GM10248 (cell line): ENCODE measurements at regions of chr5 and their contacts with region 1.

Region 1: DNA sequence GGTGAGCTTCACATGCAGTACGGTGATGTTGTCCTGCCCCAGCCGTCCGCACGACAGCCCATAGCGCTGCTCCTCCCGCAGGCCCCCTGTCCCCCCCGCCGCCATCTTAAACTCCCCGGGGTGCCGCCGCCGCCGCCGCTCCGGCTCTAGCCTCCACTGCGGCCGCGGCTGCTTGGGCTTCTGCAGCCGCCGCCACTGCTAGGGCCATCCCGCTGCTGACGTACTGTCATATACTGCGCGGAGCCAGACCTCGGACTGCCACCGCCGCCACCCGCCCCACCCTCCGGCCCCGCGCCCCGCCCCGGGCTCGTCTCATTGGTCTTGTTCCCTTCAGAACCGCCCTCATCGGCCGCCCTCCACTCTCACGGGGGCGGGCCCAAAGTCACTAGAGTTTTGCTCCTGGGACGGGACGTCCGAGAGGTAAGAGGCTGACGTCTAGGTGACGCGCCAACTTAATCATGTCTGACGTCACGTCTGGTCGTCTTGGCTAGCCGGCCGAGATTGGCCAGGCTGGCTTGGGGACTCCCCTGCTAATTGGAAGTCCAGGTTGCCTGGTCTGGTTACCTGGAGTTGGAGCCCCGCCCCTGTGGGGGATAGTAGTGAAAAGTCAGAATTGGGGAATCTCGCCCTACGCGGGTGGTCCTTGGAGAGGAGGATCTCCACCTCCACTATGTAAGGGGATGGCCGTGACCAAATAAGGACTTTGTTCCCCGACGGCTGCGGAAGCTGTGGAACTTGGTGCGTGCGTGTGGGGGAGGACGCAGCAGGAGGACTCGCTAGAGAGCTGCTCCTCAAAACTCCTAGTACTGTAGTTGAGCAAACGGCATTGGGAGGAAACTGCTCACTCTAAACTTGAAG is at the start of gene ELL2:
- DNase-seq: peak; percentile 95
- CTCF ChIP-seq: no peak

Region 2: GRCh38 chr5:95697781-95698681 is 263.8 kb before region 1 on chr5:
- CTCF ChIA-PET with region 1: no interaction called
- POLR2A ChIA-PET with region 1: no interaction called
- DNase-seq: no peak
- CTCF ChIP-seq: no peak

Region 3: GRCh38 chr5:95939465-95939864 is 22.4 kb before region 1 on chr5:
- CTCF ChIA-PET with region 1: interaction called, 37 read pairs
- POLR2A ChIA-PET with region 1: interaction called, 3 read pairs
- DNase-seq: no peak
- CTCF ChIP-seq: no peak

Region 4: GRCh38 chr5:95949810-95950209 is 12.0 kb before region 1 on chr5:
- CTCF ChIA-PET with region 1: interaction called, 37 read pairs
- POLR2A ChIA-PET with region 1: interaction called, 4 read pairs
- DNase-seq: peak; percentile 32
- CTCF ChIP-seq: no peak

Region 5: GRCh38 chr5:95973793-95974325 is 12.0 kb after region 1 on chr5:
- CTCF ChIA-PET with region 1: interaction called, 12 read pairs
- POLR2A ChIA-PET with region 1: no interaction called
- DNase-seq: peak; percentile 31
- CTCF ChIP-seq: no peak

Region 6: GRCh38 chr5:96083361-96083881 is 121.6 kb after region 1 on chr5:
- CTCF ChIA-PET with region 1: no interaction called
- POLR2A ChIA-PET with region 1: no interaction called
- DNase-seq: no peak
- CTCF ChIP-seq: no peak